Dorsolateral prefrontal cortex (tissue), 120 donors: ENCODE measurements at regions of chr21 and their contacts with region 1.

Region 1: GRCh38 chr21:42145569-42146272 is 73.2 kb upstream of the ABCG1 start:
- DNase-seq: peak; percentile 36 to 78 (median 60)
- H3K4me3 ChIP-seq: peak overlapping the region in 11 of 59 donors; percentile 1 to 36 (median 20)
- H3K27ac ChIP-seq: peak overlapping the region in 19 of 59 donors; percentile 19 to 82 (median 56)
- H3K27me3 ChIP-seq: no peaks in the 10 kb centered on the region
- CTCF ChIP-seq: peak; percentile 86 to 98 (median 95)

Region 2: GRCh38 chr21:42233067-42233961 is 87.6 kb after region 1 on chr21:
- intact Hi-C with region 1: loop called in 1 of 2 experiments (anchors 5 kb)
- DNase-seq: peak in 3 of 10 donors; percentile 46 to 59 (median 54)
- H3K4me3 ChIP-seq: peak overlapping the region in 18 of 59 donors; percentile 0 to 91 (median 67)
- H3K27ac ChIP-seq: peak overlapping the region; percentile 7 to 92 (median 87)
- H3K27me3 ChIP-seq: no peaks in the 10 kb centered on the region
- CTCF ChIP-seq: peak in 2 of 56 donors; percentile 14 to 18

Region 3: DNA sequence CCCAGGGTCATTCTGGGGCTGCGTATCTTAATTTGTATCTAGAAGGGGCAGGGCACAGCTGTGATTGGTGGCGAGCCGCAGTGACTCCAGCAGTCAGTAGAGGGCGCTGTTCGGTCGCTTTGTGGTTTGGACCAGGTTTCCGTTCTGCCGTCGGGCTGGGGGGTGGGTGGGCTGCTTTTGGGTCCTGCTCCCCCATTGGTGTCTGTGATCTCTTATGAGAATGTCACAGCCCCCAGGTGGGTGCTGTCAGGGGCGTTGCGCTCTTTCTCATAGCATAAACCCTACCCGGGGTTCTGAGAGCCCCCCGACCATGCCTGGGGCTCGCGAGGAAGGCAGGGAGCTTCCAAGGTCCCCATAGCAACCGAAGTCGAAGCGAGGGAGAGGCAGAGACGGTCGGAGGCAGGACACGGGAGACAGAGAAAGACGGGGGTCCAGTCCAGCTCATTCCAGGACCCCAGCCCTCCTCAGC is 164.1 kb after region 1 on chr21:
- intact Hi-C with region 1: loop called in 1 of 2 experiments (anchors 10 kb)
- DNase-seq: peak in 7 of 10 donors; percentile 40 to 75 (median 58)
- H3K4me3 ChIP-seq: peak overlapping the region in 33 of 59 donors; percentile 5 to 54 (median 29)
- H3K27ac ChIP-seq: peak overlapping the region in 2 of 59 donors; percentile 3 to 36
- H3K27me3 ChIP-seq: peaks cover 0 to 6% (median 0%) of the 10 kb centered on the region in 45 donors
- CTCF ChIP-seq: peak; percentile 32 to 86 (median 77)

Region 4: DNA sequence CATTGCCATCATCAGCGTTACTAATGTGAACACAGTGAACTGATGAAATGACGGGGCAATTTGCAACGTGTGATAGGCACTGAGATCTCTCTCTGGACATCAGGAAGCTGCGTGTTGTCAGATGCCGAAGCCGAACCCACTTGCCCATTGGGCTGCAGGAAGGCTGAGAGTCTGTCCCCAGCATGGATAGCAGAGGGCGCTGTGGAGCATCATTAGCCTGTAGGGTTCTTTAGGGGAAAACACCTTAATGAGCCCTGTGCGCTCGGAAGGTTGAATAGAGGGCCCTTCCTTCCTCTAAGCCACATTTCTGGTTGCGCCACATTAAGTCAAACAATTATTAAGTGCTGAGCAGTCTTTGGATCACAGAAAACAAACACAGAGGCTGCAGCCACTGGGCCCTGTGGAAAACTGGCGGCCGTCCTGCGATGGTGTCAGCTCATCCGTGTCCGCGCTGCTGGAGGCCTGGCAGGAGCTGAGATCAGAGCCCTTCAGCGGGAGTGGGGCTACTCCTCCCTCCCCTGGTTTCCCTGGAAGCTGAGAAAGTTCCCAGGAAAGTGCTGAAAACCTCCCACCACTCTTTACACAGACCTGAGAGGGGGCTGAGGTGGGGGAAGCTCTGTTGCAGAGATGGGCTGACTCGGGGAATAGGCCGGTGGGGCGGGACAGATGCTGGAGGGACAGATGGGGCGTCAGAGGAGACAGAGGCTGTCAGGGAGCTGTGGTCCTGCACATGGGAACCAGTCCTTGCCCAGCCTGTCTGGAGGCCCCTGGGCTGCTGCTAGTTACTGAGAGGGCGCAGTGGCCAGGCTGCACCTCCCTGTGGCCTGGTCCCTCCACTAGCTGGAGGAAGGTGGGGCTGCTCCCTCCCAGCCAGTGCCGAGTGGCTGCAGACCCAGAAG is 192.4 kb after region 1 on chr21:
- intact Hi-C with region 1: loop called in 1 of 2 experiments (anchors 5 kb)
- DNase-seq: peak in 9 of 10 donors; percentile 49 to 75 (median 69)
- H3K4me3 ChIP-seq: peak overlapping the region in 18 of 59 donors; percentile 6 to 47 (median 23)
- H3K27ac ChIP-seq: peak overlapping the region in 2 of 59 donors; percentile 4 to 40
- H3K27me3 ChIP-seq: peaks cover 0 to 21% (median 3%) of the 10 kb centered on the region in 45 donors
- CTCF ChIP-seq: peak; percentile 20 to 81 (median 64)

Region 5: DNA sequence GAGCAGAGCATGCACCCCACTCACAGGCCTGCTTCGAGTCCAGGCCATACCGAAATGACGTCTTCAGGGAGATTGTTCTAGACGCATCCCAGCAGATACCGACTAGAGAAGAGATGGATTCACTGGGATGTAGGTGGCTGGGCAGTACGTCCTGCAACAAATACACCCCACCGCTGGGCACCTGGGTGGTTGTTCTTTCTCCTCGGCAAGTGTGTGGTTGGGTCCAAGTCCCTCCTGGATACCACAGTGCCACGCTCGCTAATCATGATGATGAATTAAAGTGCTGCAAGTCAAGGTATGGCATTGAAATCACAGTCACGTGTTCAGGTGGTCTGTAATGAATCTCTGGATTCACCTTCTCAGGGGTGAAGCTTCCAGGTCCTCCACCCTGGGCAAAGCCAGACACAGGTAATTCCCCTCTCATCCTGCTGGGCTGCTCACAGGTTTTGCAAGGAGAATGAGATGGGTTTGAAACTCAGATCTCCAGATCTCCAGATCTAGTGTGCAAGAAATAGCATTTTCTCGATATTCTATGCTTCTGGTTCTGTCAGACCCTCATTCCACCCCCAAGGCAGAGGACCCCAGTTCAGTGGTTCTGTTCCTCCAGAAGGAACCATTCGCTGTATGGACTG is 303.7 kb after region 1 on chr21:
- intact Hi-C with region 1: loop called (anchors 2 kb)
- DNase-seq: no peak
- H3K4me3 ChIP-seq: no peak overlapping the region
- H3K27ac ChIP-seq: peak overlapping the region in 2 of 59 donors; percentile 2 to 15
- H3K27me3 ChIP-seq: peaks cover 0 to 4% (median 0%) of the 10 kb centered on the region in 45 donors
- CTCF ChIP-seq: no peak

Region 6: DNA sequence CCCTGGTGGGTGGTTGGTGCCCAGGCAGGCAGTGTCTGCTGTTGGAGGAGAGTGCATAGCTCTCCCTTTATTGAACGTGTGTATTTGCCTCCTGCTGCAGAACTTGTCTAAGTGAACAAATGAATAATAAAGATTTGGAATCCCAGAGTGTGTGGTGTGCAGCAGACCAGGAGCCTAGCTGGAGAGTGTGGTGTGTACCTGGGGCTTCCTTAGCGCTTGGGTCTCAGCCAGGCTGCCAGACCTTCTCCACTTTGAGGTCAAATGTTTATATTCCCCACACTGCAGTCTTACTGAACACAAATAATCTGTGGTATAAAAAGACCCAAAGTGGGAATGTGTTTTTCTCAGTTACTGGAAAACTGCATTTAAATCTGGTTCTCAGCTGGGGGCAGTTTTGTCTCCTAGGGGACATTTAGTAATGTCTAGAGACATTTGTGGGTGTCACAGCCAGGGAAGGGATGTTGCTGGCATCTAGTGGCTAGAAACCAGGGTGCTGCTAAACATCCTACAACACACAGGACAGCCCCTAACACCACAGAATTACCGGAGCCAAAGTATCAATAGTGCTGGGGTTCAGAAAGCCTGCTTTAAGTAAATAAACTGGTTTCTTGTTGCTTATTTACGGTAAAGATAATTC is 391.5 kb after region 1 on chr21:
- intact Hi-C with region 1: loop called (anchors 5 to 10 kb)
- DNase-seq: peak in 3 of 10 donors; percentile 33 to 38 (median 33)
- H3K4me3 ChIP-seq: no peak overlapping the region
- H3K27ac ChIP-seq: peak overlapping the region in 1 of 59 donors; percentile 8
- H3K27me3 ChIP-seq: no peaks in the 10 kb centered on the region
- CTCF ChIP-seq: peak in 53 of 56 donors; percentile 13 to 66 (median 41)